CD4-positive, alpha-beta memory T cell (primary cell): ENCODE measurements at regions of chr6 and their contacts with region 1.

Region 1: DNA sequence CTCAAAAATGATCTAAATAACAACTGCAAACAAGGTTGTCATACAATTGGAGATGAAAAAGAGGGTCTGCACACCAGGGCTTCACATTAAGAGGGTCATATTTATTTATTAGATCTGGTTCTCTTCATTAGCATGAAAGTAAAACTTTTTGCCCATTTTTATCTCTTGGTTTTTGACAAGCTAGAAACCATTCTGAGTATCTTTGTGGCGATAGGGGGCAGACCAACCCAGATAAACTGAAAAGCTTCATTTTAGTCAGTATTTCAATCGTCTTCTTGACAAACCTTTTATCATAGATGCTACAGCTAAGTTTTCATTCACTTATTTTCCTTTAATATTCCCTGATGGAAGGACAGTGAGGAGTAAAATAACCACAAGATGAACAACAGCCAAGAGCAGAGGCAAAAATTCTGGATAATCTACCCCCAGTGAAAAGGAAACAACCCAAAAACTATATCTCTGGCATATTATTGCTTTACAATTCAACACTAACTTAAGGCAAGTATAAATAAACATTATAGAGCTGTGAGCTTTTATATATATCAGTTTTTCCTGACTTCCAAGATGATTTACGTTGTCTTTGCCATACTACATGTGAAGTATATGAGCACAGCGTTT is 45.2 kb downstream of the THEMIS start:
- DNase-seq: peak; percentile 49 to 59 (median 52)
- H3K4me3 ChIP-seq: no peak overlapping the region
- H3K4me3 Mint-ChIP-seq: peak overlapping the region in 6 of 8 donors; percentile 1 to 74 (median 48)
- H3K27ac ChIP-seq: peak overlapping the region; percentile 29
- H3K27ac Mint-ChIP-seq: peak overlapping the region; percentile 42 to 92 (median 66)
- H3K4me1 ChIP-seq: peaks cover 77% of the 10 kb centered on the region
- H3K4me1 Mint-ChIP-seq: peaks cover 57 to 83% (median 72%) of the 10 kb centered on the region in 4 donors
- H3K27me3 ChIP-seq: no peaks in the 10 kb centered on the region
- H3K27me3 Mint-ChIP-seq: no peaks in the 10 kb centered on the region

Region 2: DNA sequence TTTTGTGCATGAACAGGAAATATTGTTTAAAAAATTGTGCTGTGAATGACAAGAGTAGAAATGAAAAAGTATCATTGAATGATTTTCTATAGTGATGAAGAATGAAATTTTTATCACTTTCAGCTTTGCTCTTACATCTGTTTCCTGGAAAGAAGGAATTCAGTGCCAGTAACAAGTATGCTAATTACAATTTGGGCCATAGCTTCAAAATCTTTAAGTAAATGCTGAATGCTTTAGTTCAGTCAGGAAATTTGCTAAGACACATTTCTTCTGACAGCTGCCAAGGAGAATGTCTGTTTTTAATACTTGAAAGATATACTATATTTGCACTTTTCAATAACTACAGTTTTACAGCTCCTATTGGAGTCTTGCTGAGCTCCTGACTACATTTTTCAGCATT is 940.9 kb before region 1 on chr6:
- CTCF ChIA-PET with region 1: no interaction called
- POLR2A ChIA-PET with region 1: no interaction called
- intact Hi-C with region 1: no loop called
- DNase-seq: no peak
- H3K4me3 ChIP-seq: no peak overlapping the region
- H3K4me3 Mint-ChIP-seq: no peak overlapping the region
- H3K27ac ChIP-seq: no peak overlapping the region
- H3K27ac Mint-ChIP-seq: no peak overlapping the region
- H3K4me1 ChIP-seq: no peaks in the 10 kb centered on the region
- H3K4me1 Mint-ChIP-seq: no peaks in the 10 kb centered on the region
- H3K27me3 ChIP-seq: no peaks in the 10 kb centered on the region
- H3K27me3 Mint-ChIP-seq: no peaks in the 10 kb centered on the region

Region 3: DNA sequence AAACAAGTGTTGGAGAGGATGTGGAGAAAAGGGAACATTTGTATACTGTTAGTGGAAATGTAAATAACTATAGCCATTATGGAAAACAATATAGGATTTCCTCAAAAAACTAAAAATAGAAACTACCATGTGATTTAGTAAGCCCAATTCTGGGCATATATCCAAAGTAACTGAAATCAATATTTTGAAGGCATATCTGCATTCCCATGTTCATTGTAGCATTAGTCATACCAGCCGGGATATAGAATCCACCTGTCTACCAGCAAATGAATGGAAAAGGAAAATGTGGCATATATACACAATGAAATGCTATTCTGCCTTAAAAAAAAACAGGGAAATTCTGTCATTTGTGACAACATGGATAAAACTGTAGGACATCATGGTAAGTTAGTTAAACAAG is 294.0 kb before region 1 on chr6:
- CTCF ChIA-PET with region 1: no interaction called
- POLR2A ChIA-PET with region 1: no interaction called
- intact Hi-C with region 1: no loop called
- DNase-seq: no peak
- H3K4me3 ChIP-seq: no peak overlapping the region
- H3K4me3 Mint-ChIP-seq: no peak overlapping the region
- H3K27ac ChIP-seq: no peak overlapping the region
- H3K27ac Mint-ChIP-seq: no peak overlapping the region
- H3K4me1 ChIP-seq: no peaks in the 10 kb centered on the region
- H3K4me1 Mint-ChIP-seq: no peaks in the 10 kb centered on the region
- H3K27me3 ChIP-seq: no peaks in the 10 kb centered on the region
- H3K27me3 Mint-ChIP-seq: peaks cover 1 to 2% of the 10 kb centered on the region in 2 donors

Region 4: GRCh38 chr6:127737009-127737486 is 118.6 kb before region 1 on chr6:
- CTCF ChIA-PET with region 1: interaction called, 62 read pairs
- POLR2A ChIA-PET with region 1: interaction called, 3 read pairs
- intact Hi-C with region 1: loop called (anchors 1 kb)
- DNase-seq: peak; percentile 41 to 69 (median 64)
- H3K4me3 ChIP-seq: no peak overlapping the region
- H3K4me3 Mint-ChIP-seq: peak overlapping the region in 1 of 8 donors; percentile 48
- H3K27ac ChIP-seq: no peak overlapping the region
- H3K27ac Mint-ChIP-seq: peak overlapping the region in 6 of 7 donors; percentile 9 to 59 (median 52)
- H3K4me1 ChIP-seq: peaks cover 8% of the 10 kb centered on the region
- H3K4me1 Mint-ChIP-seq: peaks cover 33 to 59% (median 51%) of the 10 kb centered on the region in 4 donors
- H3K27me3 ChIP-seq: no peaks in the 10 kb centered on the region
- H3K27me3 Mint-ChIP-seq: no peaks in the 10 kb centered on the region

Region 5: GRCh38 chr6:127900935-127901334 is 45.3 kb after region 1 on chr6 and contains the start of gene THEMIS:
- CTCF ChIA-PET with region 1: interaction called, 36 read pairs
- POLR2A ChIA-PET with region 1: interaction called, 11 read pairs
- intact Hi-C with region 1: loop called (anchors 1 kb)
- DNase-seq: peak; percentile 66 to 73 (median 69)
- H3K4me3 ChIP-seq: peak within 1 kb of the TSS; percentile 66 to 72
- H3K4me3 Mint-ChIP-seq: peak within 1 kb of the TSS; percentile 98 to 100 (median 99)
- H3K27ac ChIP-seq: peak within 1 kb of the TSS; percentile 73
- H3K27ac Mint-ChIP-seq: peak within 1 kb of the TSS; percentile 90 to 98 (median 96)
- H3K4me1 ChIP-seq: peaks cover 68% of the 10 kb centered on the region
- H3K4me1 Mint-ChIP-seq: peaks cover 41 to 70% (median 56%) of the 10 kb centered on the region in 4 donors
- H3K27me3 ChIP-seq: no peaks in the 10 kb centered on the region
- H3K27me3 Mint-ChIP-seq: no peaks in the 10 kb centered on the region
- total RNA-seq, gene THEMIS: 58.1 to 58.7 TPM

Region 6: GRCh38 chr6:127951172-127951917 is 95.7 kb after region 1 on chr6:
- CTCF ChIA-PET with region 1: interaction called, 17 read pairs
- POLR2A ChIA-PET with region 1: interaction called, 3 read pairs
- intact Hi-C with region 1: no loop called
- DNase-seq: peak in 4 of 5 donors; percentile 61 to 73 (median 66)
- H3K4me3 ChIP-seq: peak overlapping the region; percentile 4 to 12
- H3K4me3 Mint-ChIP-seq: peak overlapping the region; percentile 69 to 88 (median 81)
- H3K27ac ChIP-seq: peak overlapping the region; percentile 14
- H3K27ac Mint-ChIP-seq: peak overlapping the region; percentile 83 to 91 (median 88)
- H3K4me1 ChIP-seq: peaks cover 66% of the 10 kb centered on the region
- H3K4me1 Mint-ChIP-seq: peaks cover 38 to 69% (median 55%) of the 10 kb centered on the region in 4 donors
- H3K27me3 ChIP-seq: no peaks in the 10 kb centered on the region
- H3K27me3 Mint-ChIP-seq: no peaks in the 10 kb centered on the region

Region 7: GRCh38 chr6:128168244-128168643 is 312.6 kb after region 1 on chr6:
- CTCF ChIA-PET with region 1: interaction called, 3 read pairs
- POLR2A ChIA-PET with region 1: no interaction called
- intact Hi-C with region 1: loop called (anchors 10 kb)
- DNase-seq: no peak
- H3K4me3 ChIP-seq: no peak overlapping the region
- H3K4me3 Mint-ChIP-seq: no peak overlapping the region
- H3K27ac ChIP-seq: no peak overlapping the region
- H3K27ac Mint-ChIP-seq: no peak overlapping the region
- H3K4me1 ChIP-seq: no peaks in the 10 kb centered on the region
- H3K4me1 Mint-ChIP-seq: peaks cover 0 to 3% (median 2%) of the 10 kb centered on the region in 4 donors
- H3K27me3 ChIP-seq: no peaks in the 10 kb centered on the region
- H3K27me3 Mint-ChIP-seq: peaks cover 0 to 2% of the 10 kb centered on the region in 2 donors

Region 8: GRCh38 chr6:128520436-128521281 is 665.0 kb after region 1 on chr6 and contains the start of gene PTPRK:
- CTCF ChIA-PET with region 1: interaction called, 5 read pairs
- POLR2A ChIA-PET with region 1: interaction called, 5 read pairs
- intact Hi-C with region 1: loop called (anchors 2 kb)
- DNase-seq: peak; percentile 77 to 88 (median 81)
- H3K4me3 ChIP-seq: peak within 1 kb of the TSS; percentile 59 to 71
- H3K4me3 Mint-ChIP-seq: peak within 1 kb of the TSS; percentile 85 to 96 (median 90)
- H3K27ac ChIP-seq: peak within 1 kb of the TSS; percentile 3
- H3K27ac Mint-ChIP-seq: peak within 1 kb of the TSS; percentile 58 to 87 (median 84)
- H3K4me1 ChIP-seq: peaks cover 23% of the 10 kb centered on the region
- H3K4me1 Mint-ChIP-seq: peaks cover 11 to 27% (median 19%) of the 10 kb centered on the region in 4 donors
- H3K27me3 ChIP-seq: peaks cover 37% of the 10 kb centered on the region
- H3K27me3 Mint-ChIP-seq: peaks cover 47 to 62% of the 10 kb centered on the region in 2 donors
- total RNA-seq, gene PTPRK: 0.47 to 0.61 TPM